ENCODE measurements at regions of chr11 and their contacts with region 1.

Region 1: GRCh38 chr11:25453471-25453870 is 878.5 kb upstream of the ANO3 start:
- ATAC-seq: no peak
- H3K4me3 ChIP-seq: no peak overlapping the region
- H3K27ac ChIP-seq: no peak overlapping the region
- H3K4me1 ChIP-seq: no peaks in the 10 kb centered on the region

Region 2: DNA sequence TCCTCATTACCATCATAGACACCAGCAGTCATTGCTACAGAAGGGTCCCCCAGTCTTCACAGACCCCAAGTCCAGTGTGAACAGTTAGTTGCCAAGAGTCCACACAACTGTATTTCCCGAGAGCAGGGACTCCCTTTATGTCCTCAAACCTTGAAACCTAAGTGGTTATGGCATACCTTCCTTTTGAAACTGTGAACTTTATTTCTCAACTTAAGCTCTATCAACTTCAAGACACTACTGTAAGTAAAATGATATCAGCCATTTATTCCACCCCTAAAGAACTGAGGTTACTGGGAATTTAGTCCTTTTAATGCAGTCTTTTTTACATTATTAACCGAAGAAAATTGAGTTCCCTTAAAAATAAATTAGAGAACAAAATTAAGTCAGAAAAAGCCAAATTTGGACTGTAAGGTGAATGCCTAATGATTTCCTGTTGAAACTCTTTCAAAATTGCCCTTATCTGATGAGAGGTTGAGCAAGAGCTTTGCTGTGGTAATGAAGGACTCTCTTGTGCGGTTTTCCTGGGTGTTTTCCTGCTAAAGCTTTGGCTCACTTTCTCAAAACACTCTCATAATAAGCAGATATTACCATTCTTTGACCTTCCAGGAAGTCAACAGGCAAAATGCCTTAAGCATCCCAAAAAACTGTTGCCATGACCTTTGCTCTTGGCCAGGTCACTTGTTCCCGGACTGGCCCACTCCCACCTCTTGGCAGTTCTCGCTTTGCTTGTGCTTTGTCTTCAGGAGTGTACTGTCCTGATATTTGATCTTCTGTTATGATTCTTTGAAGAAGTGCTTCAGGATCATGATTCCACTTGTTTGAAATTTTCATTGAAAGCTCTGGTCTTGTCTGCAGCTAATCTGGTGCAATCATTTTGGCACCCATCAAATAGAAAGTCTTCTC is 113.1 kb after region 1 on chr11:
- in situ Hi-C with region 1: loop called in 1 of 9 experiments (anchors 25 kb)
- ATAC-seq: no peak
- H3K4me3 ChIP-seq: no peak overlapping the region
- H3K27ac ChIP-seq: no peak overlapping the region
- H3K4me1 ChIP-seq: peaks cover 0 to 3% of the 10 kb centered on the region in 2 donors

Measured in motor neuron (in vitro differentiated cells).